Activated CD4-positive, alpha-beta memory T cell treated with anti-CD3 and anti-CD28 coated beads for 36 hours (primary cell): ENCODE measurements at regions of chr3 and their contacts with region 1.

Region 1: DNA sequence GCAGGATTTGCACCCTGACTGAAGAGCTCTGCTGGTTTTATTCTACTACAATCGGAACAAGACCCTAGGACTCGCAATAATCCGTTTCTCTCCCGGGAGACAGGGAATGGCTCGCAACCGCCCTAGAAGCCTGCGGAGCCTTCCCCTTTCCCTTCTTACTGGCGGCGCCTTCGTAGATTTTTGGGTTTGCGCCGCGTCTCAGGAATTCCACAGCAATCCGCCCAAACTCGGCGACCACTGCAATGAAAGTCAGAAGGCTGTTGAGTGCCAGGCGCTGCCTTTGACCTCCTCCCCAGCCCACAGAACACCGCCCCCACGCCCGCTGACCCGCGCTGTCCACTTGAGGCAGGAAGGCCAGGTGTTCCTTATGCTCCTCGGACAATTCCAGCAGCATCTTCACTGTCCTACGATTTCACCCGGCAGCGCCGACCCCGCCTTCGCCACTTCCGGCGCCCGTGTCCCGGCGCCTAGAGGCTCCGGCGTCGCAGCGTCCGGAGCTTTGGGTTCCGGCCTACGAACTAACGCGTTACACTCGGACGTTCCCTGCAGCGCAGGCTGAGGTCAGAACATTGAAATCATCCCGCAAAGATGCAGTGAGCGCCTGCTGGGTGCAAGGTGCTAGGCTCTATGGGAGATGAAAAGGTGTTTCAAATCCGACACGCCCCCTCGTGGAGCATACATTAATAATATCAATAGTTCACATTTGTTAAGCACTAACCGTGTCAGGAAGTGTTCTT is at the start of gene COMMD2:
- DNase-seq: peak; percentile 89
- H3K4me3 Mint-ChIP-seq: peak within 1 kb of the TSS; percentile 90
- H3K27ac Mint-ChIP-seq: peak within 1 kb of the TSS; percentile 87
- H3K4me1 Mint-ChIP-seq: peaks cover 22% of the 10 kb centered on the region
- H3K27me3 Mint-ChIP-seq: no peaks in the 10 kb centered on the region
- total RNA-seq, gene COMMD2: 28.4 to 34.4 TPM

Region 2: DNA sequence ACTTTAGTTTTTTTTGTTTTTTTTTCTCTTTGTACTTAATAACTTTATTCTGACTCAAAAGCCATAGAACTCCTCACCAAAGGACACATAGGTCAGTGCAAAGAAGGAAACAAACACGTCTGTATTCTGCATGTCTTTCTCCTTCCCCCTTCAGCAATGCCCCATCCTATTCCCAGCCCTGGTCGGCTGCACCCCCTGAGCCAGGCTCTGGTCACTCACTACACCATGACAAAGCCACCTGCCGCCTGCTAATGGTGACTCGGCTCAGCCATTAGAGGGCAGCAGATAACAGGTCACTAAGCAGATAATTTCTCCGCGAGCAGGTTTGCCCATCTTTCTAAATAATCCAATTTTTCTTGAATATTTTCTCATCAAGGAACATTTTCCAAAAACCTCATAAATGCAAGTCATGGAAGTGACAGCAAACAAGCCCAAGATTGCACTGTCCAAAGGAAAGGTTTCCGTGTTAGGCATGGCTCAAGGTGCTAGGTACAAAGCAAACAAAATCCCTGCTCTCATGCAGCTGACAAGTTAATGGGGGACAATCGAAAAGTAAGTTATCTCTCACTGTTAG is 239.9 kb before region 1 on chr3:
- CTCF ChIA-PET with region 1: interaction called, 3 read pairs
- POLR2A ChIA-PET with region 1: no interaction called
- intact Hi-C with region 1: loop called (anchors 1 kb)
- DNase-seq: peak; percentile 51
- H3K4me3 Mint-ChIP-seq: no peak overlapping the region
- H3K27ac Mint-ChIP-seq: no peak overlapping the region
- H3K4me1 Mint-ChIP-seq: peaks cover 10% of the 10 kb centered on the region
- H3K27me3 Mint-ChIP-seq: peaks cover 15% of the 10 kb centered on the region

Region 3: DNA sequence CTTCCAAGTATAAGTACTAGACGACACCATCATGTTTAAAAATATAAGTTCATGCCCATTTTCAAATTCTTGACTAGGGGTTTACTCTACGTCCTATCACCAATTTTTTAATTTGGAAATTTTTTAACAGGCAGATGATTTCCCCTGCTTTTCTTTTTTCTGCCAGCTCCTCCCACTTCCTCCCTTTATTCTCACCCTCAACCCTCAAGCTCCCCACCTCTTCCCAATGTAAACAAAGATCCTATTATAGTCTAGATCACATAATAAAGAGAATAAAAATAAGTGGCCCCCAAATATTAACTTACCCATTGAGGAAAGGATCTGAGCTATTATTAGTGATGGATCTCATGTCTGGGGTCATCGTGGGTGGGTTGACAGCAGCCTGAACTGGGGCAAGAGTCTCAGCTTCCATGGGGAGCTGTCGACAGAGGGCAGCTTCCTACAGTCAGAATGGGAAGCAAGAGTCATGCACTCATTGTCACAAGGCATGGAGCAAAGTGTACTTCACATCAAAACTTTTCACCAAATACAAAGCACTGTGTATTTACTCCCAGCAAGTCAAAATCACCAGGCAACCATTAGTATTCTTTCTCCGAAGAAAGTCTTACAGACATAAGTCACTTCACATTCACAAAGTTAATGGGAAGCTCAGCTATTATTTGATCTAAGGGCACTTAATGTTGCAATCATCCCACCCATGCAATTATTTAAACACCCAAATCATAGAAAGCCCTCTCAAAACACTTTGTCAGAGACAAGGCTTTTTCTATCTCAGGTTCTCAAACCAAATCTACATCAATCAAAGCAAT is 224.5 kb before region 1 on chr3:
- CTCF ChIA-PET with region 1: interaction called, 8 read pairs
- POLR2A ChIA-PET with region 1: no interaction called
- intact Hi-C with region 1: loop called (anchors 1 kb)
- DNase-seq: no peak
- H3K4me3 Mint-ChIP-seq: no peak overlapping the region
- H3K27ac Mint-ChIP-seq: no peak overlapping the region
- H3K4me1 Mint-ChIP-seq: no peaks in the 10 kb centered on the region
- H3K27me3 Mint-ChIP-seq: no peaks in the 10 kb centered on the region

Region 4: GRCh38 chr3:149566292-149566975 is 185.8 kb before region 1 on chr3:
- CTCF ChIA-PET with region 1: interaction called, 29 read pairs
- POLR2A ChIA-PET with region 1: no interaction called
- intact Hi-C with region 1: loop called (anchors 1 kb)
- DNase-seq: no peak
- H3K4me3 Mint-ChIP-seq: no peak overlapping the region
- H3K27ac Mint-ChIP-seq: no peak overlapping the region
- H3K4me1 Mint-ChIP-seq: no peaks in the 10 kb centered on the region
- H3K27me3 Mint-ChIP-seq: peaks cover 4% of the 10 kb centered on the region

Region 5: GRCh38 chr3:149575961-149576564 is 176.2 kb before region 1 on chr3:
- CTCF ChIA-PET with region 1: interaction called, 29 read pairs
- POLR2A ChIA-PET with region 1: no interaction called
- intact Hi-C with region 1: loop called (anchors 2 kb)
- DNase-seq: peak; percentile 43
- H3K4me3 Mint-ChIP-seq: no peak overlapping the region
- H3K27ac Mint-ChIP-seq: no peak overlapping the region
- H3K4me1 Mint-ChIP-seq: peaks cover 38% of the 10 kb centered on the region
- H3K27me3 Mint-ChIP-seq: peaks cover 11% of the 10 kb centered on the region

Region 6: DNA sequence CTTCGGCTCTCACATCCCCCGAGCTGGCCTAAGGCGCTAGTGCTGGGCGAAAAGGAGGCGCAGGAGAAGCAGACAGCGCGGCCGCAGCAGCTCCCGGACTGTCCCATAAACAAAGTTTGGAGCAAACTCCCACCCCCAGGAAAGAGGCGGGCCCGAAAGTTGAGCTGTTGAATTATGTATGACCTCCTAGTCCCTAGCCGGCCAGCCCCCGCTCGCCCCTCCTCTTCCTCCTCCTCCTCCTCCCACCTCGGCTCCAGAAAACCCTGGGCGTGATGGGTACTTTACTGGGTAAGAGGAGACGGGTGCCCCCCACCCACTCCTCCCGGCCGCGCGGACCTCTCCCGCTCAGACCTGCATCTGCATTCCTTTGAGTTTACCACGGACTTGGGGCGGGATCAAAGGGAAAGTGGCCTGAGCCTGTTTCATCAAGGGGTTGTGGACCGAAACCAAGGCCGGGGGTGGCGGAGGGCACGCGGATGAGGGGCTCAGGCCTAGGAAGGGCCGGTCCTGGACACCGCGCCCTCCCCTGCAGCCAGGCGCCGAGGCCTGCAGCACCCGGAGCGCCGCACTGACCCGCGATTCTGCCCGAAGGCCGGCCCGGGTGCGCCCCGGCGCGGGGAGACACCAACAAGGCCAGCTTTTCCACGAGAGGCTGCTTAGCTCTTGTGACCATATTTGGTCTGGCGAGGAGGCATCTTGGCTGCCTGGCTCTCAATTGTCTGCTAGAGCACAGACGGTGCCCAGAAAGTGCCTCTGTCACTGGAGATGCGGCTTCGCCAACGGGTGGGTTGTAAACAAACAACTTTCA is 94.1 kb before region 1 on chr3 and contains the start of gene WWTR1:
- CTCF ChIA-PET with region 1: interaction called, 10 read pairs
- POLR2A ChIA-PET with region 1: no interaction called
- intact Hi-C with region 1: no loop called
- DNase-seq: peak; percentile 65
- H3K4me3 Mint-ChIP-seq: peak within 1 kb of the TSS; percentile 82
- H3K27ac Mint-ChIP-seq: no peak within 1 kb of the TSS
- H3K4me1 Mint-ChIP-seq: peaks cover 9% of the 10 kb centered on the region
- H3K27me3 Mint-ChIP-seq: peaks cover 51% of the 10 kb centered on the region
- total RNA-seq, gene WWTR1: 1.0 to 1.2 TPM

Region 7: DNA sequence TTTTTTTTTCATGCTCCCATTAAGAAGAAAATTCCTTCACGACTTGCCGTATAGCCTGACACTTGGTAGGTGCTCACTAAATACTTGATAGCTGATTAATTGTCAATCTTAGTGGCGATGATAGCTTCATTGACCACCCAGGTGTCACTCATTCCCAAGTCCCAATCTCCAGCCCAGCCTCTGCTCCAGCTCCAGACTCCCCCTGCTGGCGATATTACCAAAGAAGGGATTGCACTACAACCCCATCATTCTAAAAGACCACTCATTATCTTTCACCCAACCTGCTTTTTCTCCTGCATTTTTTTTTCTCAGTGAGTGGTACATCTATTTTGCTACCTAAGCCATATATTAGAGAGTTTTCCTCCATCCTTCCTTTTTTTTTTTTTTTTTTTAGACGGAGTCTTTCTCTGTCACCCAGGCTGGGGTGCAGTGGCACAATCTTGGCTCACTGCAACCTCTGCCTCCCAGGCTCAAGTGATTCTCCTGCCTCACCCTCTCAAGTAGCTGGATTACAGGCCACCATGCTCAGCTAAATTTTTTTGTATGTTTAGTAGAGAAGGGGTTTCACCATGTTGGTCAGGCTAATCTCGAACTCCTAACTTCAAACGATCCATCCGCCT is 19.5 kb after region 1 on chr3:
- CTCF ChIA-PET with region 1: interaction called, 16 read pairs
- POLR2A ChIA-PET with region 1: no interaction called
- intact Hi-C with region 1: no loop called
- DNase-seq: peak; percentile 45
- H3K4me3 Mint-ChIP-seq: no peak overlapping the region
- H3K27ac Mint-ChIP-seq: no peak overlapping the region
- H3K4me1 Mint-ChIP-seq: no peaks in the 10 kb centered on the region
- H3K27me3 Mint-ChIP-seq: peaks cover 14% of the 10 kb centered on the region

Region 8: GRCh38 chr3:150114873-150115540 is 362.8 kb after region 1 on chr3:
- CTCF ChIA-PET with region 1: no interaction called
- POLR2A ChIA-PET with region 1: no interaction called
- intact Hi-C with region 1: no loop called
- DNase-seq: no peak
- H3K4me3 Mint-ChIP-seq: no peak overlapping the region
- H3K27ac Mint-ChIP-seq: no peak overlapping the region
- H3K4me1 Mint-ChIP-seq: peaks cover 3% of the 10 kb centered on the region
- H3K27me3 Mint-ChIP-seq: peaks cover 22% of the 10 kb centered on the region